Spleen (tissue), 13 donors: ENCODE measurements at regions of chr12 and their contacts with region 1.

Region 1: GRCh38 chr12:14239350-14239934 is 126.0 kb upstream of the ATF7IP start:
- DNase-seq: no peak
- H3K4me3 ChIP-seq: peak overlapping the region in 6 of 8 donors; percentile 2 to 53 (median 24)
- H3K27ac ChIP-seq: peak overlapping the region; percentile 14 to 87 (median 76)
- H3K4me1 ChIP-seq: peaks cover 5 to 34% (median 26%) of the 10 kb centered on the region in 6 donors
- H3K27me3 ChIP-seq: no peaks in the 10 kb centered on the region
- CTCF ChIP-seq: peak in 2 of 11 experiments; percentile 11 to 34
- POLR2A ChIP-seq: no peak

Region 2: DNA sequence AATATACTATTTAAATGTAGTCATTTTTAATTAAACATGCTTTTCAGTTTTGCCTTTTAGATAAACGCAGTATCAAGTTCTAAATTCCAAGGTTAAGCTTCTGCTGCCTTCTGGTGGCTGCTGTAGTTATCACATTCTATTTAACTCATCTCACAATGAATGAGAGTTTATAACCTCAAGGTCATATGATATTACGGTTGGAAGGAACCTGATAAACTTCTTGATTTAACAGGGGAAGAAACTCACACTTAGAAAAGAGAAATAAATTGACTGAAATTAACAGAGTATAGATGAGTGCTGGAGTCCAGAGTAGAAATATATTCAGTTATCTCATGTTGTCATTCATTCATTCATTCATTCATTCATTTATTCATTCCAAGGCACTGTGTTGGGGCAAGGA is 425.1 kb after region 1 on chr12:
- intact Hi-C with region 1: loop called (anchors 10 kb)
- DNase-seq: no peak
- H3K4me3 ChIP-seq: no peak overlapping the region
- H3K27ac ChIP-seq: no peak overlapping the region
- H3K4me1 ChIP-seq: peaks cover 0 to 9% (median 0%) of the 10 kb centered on the region in 6 donors
- H3K27me3 ChIP-seq: no peaks in the 10 kb centered on the region
- CTCF ChIP-seq: peak; percentile 33 to 67 (median 60)
- POLR2A ChIP-seq: no peak

Region 3: DNA sequence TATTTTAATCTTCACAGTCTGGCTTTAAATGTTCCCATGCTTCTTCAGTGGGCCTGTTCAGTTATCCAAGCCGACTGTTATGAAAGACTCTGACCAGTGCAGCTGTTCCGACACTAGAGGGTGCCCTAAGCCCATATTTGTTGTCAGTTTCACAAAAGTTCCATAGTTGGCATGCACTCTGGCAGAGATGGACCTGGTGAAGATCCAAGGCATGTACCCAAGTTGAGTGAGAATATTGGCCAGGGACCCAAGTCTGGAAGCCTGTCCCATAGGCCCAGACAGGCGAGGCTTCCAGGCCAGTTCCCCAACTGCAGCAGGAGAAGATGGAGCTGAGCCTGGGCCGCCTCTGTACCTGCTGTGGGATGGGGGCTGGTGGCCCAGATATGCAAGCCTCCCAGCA is 484.3 kb after region 1 on chr12:
- intact Hi-C with region 1: loop called (anchors 5 kb)
- DNase-seq: no peak
- H3K4me3 ChIP-seq: no peak overlapping the region
- H3K27ac ChIP-seq: no peak overlapping the region
- H3K4me1 ChIP-seq: no peaks in the 10 kb centered on the region
- H3K27me3 ChIP-seq: no peaks in the 10 kb centered on the region
- CTCF ChIP-seq: peak; percentile 51 to 79 (median 70)
- POLR2A ChIP-seq: no peak